GM10248 (cell line): ENCODE measurements at regions of chr2 and their contacts with region 1.

Region 1: DNA sequence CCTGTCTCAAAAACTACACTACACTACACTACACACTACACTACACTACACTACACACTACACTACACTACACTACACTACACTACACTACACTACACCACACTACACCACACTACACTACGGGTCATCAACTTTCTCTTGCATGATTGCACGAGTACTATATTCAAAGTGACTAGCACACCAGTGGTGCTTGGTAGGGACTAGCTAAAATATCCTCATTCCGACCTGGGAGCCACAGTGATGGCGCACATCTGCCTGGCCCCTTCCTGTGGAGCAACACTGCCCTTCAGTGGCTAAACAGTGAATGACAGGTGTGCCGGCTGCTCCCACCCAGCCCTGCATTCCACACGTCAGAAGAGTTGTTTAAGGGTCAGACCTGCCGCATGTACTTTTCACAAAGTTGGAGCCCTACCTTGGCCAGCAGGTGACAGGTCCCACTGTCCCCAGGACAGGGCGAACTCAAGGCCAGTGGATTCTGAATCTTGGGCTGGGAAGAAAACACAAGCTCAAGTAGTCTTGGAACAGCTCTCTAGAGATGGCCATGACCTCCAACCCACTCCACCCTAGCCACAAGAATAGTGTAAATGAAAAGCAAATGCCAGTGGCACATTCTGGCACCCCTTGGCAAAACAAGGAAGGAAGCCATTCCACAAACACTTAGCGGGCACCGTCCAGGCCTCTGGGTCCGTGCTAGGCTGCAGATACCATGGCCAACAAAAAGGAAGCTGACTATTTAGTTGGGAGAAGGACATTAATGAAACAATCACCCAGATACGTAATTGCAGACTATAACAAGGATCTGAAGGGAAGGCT is 79.7 kb upstream of the MSH2 start:
- DNase-seq: peak; percentile 82
- CTCF ChIP-seq: peak; percentile 99

Region 2: GRCh38 chr2:46929612-46930011 is 393.6 kb before region 1 on chr2:
- CTCF ChIA-PET with region 1: interaction called, 13 read pairs
- POLR2A ChIA-PET with region 1: no interaction called
- DNase-seq: no peak
- CTCF ChIP-seq: no peak

Region 3: DNA sequence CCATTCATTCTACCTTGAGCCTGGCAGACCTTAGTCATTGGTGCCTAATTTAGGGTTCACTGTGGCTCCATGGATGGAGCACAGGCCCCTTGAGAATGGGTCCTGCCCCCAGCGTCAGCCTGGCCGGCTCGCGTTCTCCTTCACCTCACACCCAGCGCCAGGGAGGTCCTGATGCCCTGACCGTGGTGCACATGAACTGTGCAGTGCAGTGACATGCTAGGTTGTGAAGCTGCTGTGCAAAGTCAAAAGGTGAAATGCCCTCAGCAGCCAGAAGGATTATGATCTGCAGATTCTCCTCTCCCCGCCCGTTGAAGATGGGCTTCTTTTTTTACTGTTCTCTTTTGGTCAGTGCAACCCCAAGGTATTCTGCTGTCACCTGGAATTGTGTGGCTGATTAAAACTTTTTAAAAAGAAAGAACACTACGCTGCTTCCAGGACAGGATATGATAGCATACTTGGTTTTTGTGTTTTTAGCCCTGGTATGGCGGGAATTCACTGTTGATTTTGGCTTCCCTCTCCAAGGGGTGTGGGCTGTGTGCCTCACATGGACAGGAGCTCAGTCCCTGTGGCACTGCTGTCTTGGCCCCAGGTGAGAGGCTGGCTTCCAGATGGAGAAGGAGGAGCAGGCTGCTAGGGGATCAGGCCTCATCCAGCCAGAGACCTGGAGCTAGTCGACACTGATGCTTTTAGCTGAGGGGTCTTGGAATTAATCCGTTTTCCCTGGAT is 358.2 kb before region 1 on chr2:
- CTCF ChIA-PET with region 1: interaction called, 11 read pairs
- POLR2A ChIA-PET with region 1: no interaction called
- DNase-seq: no peak
- CTCF ChIP-seq: no peak

Region 4: DNA sequence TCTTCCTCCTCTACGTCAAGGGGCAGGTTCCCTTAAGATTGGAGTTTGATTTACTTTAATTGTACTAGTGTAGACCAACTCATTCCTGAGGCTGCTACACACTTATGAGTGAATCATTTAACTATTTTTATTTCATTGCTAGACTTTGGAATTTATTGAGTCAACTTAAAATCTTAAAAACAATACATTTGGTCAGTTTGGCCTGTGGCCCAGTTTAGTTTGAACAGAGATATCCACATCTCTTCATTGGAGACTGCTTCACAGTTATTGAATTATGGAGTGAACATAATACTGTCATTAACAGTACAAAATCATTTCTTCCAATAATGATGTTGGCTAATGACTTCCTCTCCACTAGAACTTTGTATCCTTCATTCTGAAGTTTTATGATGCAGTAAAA is 133.6 kb before region 1 on chr2:
- CTCF ChIA-PET with region 1: interaction called, 10 read pairs
- POLR2A ChIA-PET with region 1: no interaction called
- DNase-seq: no peak
- CTCF ChIP-seq: no peak

Region 5: GRCh38 chr2:47309952-47310800 is 13.0 kb before region 1 on chr2:
- CTCF ChIA-PET with region 1: interaction called, 158 read pairs
- POLR2A ChIA-PET with region 1: no interaction called
- DNase-seq: peak; percentile 88
- CTCF ChIP-seq: no peak

Region 6: DNA sequence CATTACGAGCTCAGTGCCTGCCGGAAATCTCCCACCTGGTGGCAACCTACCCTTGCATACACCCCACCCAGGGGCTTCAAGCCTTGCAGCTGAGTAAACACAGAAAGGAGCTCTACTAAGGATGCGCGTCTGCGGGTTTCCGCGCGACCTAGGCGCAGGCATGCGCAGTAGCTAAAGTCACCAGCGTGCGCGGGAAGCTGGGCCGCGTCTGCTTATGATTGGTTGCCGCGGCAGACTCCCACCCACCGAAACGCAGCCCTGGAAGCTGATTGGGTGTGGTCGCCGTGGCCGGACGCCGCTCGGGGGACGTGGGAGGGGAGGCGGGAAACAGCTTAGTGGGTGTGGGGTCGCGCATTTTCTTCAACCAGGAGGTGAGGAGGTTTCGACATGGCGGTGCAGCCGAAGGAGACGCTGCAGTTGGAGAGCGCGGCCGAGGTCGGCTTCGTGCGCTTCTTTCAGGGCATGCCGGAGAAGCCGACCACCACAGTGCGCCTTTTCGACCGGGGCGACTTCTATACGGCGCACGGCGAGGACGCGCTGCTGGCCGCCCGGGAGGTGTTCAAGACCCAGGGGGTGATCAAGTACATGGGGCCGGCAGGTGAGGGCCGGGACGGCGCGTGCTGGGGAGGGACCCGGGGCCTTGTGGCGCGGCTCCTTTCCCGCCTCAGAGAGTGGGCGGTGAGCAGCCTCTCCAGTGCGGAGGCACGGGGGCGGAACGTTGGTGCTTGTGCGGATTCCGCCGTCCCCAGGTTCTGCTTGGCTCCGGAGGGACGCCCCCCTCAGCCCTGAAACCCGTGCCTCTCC is 79.8 kb after region 1 on chr2 and contains the start of gene MSH2:
- CTCF ChIA-PET with region 1: interaction called, 10 read pairs
- POLR2A ChIA-PET with region 1: no interaction called
- DNase-seq: peak; percentile 99
- CTCF ChIP-seq: no peak